CD4-positive, alpha-beta T cell (primary cell): ENCODE measurements at regions of chr14 and their contacts with region 1.

Region 1: GRCh38 chr14:98203421-98203820 is 1068.6 kb downstream of the BCL11B start:
- DNase-seq: peak in 3 of 14 experiments; percentile 25 to 53 (median 45)
- ATAC-seq: peak; percentile 62
- H3K4me3 ChIP-seq: peak overlapping the region; percentile 44
- H3K4me3 Mint-ChIP-seq: peak overlapping the region; percentile 82
- H3K27ac ChIP-seq: peak overlapping the region in 1 of 2 donors; percentile 18
- H3K27ac Mint-ChIP-seq: peak overlapping the region; percentile 93
- H3K4me1 ChIP-seq: peaks cover 63% of the 10 kb centered on the region
- H3K4me1 Mint-ChIP-seq: peaks cover 99% of the 10 kb centered on the region
- H3K27me3 ChIP-seq: no peaks in the 10 kb centered on the region
- H3K27me3 Mint-ChIP-seq: no peaks in the 10 kb centered on the region
- CTCF ChIP-seq: no peak

Region 2: GRCh38 chr14:98189062-98189461 is 14.4 kb before region 1 on chr14:
- CTCF ChIA-PET with region 1: no interaction called
- POLR2A ChIA-PET with region 1: interaction called, 35 read pairs
- intact Hi-C with region 1: no loop called
- DNase-seq: peak in 5 of 14 experiments; percentile 51 to 85 (median 55)
- ATAC-seq: peak; percentile 31
- H3K4me3 ChIP-seq: peak overlapping the region; percentile 24
- H3K4me3 Mint-ChIP-seq: peak overlapping the region; percentile 80
- H3K27ac ChIP-seq: peak overlapping the region; percentile 76 to 87
- H3K27ac Mint-ChIP-seq: peak overlapping the region; percentile 93
- H3K4me1 ChIP-seq: peaks cover 92% of the 10 kb centered on the region
- H3K4me1 Mint-ChIP-seq: peaks cover 100% of the 10 kb centered on the region
- H3K27me3 ChIP-seq: no peaks in the 10 kb centered on the region
- H3K27me3 Mint-ChIP-seq: no peaks in the 10 kb centered on the region
- CTCF ChIP-seq: no peak